Heart right ventricle (tissue), 16 donors: ENCODE measurements at regions of chr6 and their contacts with region 1.

Region 1: DNA sequence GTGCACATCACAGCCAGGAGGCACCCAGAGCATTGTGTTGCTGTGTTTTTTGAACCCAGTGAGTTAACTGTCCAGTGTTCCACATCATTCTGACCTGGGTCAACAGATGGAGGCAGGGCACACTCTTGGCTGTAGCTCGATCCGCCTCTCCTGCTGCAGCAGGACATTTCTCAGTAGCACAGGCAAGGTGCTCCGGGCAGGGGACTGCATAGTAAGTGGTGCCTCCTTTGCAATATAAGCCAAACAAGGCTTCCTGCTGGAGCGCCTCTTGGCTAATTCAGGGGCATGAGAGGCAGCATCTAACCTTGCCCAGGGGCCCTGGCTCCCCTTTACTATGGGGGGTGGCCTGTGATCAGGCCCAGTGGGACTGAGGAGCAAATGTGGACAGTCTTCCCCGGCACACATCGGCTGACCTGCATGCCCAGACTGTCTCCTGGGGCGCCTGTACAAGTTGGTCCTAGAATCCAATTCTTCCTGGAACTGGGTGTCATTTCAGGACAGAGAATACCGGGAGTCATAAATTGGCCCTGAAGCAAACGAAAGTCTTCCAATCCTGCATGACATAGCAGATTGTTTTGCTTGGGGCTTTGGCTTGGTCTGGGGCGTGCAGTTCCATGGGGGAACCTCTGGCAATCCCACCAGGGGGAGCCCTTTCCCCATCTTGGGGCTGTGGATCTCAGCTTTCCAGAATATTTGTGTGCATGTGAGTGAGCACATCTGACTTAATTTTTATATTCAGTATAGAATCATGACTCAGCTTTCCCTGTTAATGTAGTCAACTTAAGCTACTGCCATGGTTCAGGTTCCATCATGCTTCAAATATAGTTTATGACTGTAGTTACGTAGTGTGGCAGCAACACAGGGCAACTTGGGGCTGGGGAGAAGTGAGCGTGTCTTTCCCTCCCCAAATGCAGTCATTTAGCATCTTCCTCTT is 56.0 kb upstream of the DDR1 start:
- DNase-seq: peak; percentile 87 to 92
- ATAC-seq: peak; percentile 92 to 96 (median 94)
- H3K4me3 ChIP-seq: peak overlapping the region in 5 of 10 donors; percentile 17 to 41 (median 23)
- H3K27ac ChIP-seq: peak overlapping the region in 9 of 10 donors; percentile 33 to 91 (median 78)
- H3K4me1 ChIP-seq: peaks cover 3 to 49% (median 15%) of the 10 kb centered on the region in 9 donors
- H3K27me3 ChIP-seq: no peaks in the 10 kb centered on the region
- CTCF ChIP-seq: peak; percentile 89 to 97 (median 94)

Region 2: GRCh38 chr6:30742316-30743098 is 85.8 kb before region 1 on chr6 and contains the start of gene FLOT1:
- intact Hi-C with region 1: loop called in 9 of 10 experiments (anchors 5 to 10 kb)
- DNase-seq: peak; percentile 96 to 98
- ATAC-seq: peak; percentile 83 to 94 (median 90)
- H3K4me3 ChIP-seq: peak within 1 kb of the TSS; percentile 63 to 95 (median 82)
- H3K27ac ChIP-seq: peak within 1 kb of the TSS; percentile 91 to 100 (median 96)
- H3K4me1 ChIP-seq: peaks cover 11 to 63% (median 52%) of the 10 kb centered on the region in 9 donors
- H3K27me3 ChIP-seq: no peaks in the 10 kb centered on the region
- CTCF ChIP-seq: peak in 1 of 9 donors; percentile 18
- total RNA-seq, gene FLOT1: 158 to 280 (median 184) TPM

Region 3: GRCh38 chr6:30877419-30878371 is 49.4 kb after region 1 on chr6:
- intact Hi-C with region 1: loop called (anchors 1 to 5 kb)
- DNase-seq: peak; percentile 86 to 92
- ATAC-seq: peak; percentile 87 to 92 (median 89)
- H3K4me3 ChIP-seq: peak overlapping the region in 9 of 10 donors; percentile 14 to 49 (median 40)
- H3K27ac ChIP-seq: peak overlapping the region in 9 of 10 donors; percentile 3 to 86 (median 78)
- H3K4me1 ChIP-seq: peaks cover 9 to 33% (median 18%) of the 10 kb centered on the region in 9 donors
- H3K27me3 ChIP-seq: no peaks in the 10 kb centered on the region
- CTCF ChIP-seq: peak; percentile 71 to 95 (median 88)

Region 4: DNA sequence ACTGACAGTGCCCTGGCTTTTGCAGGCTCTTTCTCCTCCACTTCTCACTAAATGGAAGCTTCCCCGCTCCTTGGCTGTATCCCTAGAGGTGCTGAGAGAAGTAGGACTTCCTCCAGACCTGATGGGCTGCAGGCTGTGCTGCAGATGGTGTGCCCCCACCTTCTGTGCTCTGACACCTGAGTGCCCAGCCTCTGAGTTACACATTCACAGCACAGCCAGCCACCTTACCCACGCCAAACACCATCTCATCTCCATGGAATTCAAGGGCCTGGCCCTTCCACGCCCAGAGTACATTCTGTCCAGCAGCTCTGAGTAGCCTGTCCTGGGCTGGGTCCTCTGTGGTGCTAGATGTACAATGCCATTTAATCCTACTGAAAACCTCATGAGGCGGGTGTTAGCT is 98.3 kb after region 1 on chr6:
- intact Hi-C with region 1: no loop called
- DNase-seq: no peak
- ATAC-seq: peak in 7 of 8 donors; percentile 49 to 93 (median 65)
- H3K4me3 ChIP-seq: no peak overlapping the region
- H3K27ac ChIP-seq: no peak overlapping the region
- H3K4me1 ChIP-seq: peaks cover 0 to 16% (median 0%) of the 10 kb centered on the region in 9 donors
- H3K27me3 ChIP-seq: no peaks in the 10 kb centered on the region
- CTCF ChIP-seq: no peak

Region 5: DNA sequence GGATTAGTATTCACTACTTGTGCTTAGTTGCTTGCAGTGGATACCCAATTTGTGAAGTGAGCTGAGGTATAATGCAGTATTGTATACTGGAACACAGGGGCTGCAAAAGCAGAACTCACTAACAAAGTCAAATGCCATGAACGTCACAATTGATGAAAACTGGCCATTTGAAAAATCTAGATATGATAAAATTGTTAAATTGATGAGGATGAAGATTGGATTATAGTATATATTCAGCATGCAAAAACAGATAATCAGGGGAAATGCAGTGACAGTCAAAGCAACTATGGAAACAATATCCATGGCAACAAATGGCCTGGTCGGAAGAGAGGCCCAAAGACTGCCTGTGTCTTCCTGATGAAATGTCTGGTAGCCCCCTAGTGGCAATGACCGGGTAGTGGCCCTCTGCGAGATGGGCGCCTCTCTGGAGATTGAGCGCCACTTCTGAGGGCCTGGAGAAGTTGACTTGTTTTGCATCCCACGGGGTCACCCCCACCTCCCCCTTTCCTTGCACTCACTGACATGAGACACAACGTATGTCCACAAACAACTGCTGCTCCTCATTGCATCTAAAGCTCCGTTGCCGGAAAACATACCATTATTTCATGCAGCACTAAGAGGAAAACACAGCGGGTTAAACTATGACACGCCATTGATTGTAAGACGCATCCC is 240.5 kb after region 1 on chr6:
- intact Hi-C with region 1: loop called in 4 of 10 experiments (anchors 5 kb)
- DNase-seq: peak; percentile 74 to 81
- ATAC-seq: peak; percentile 77 to 93 (median 84)
- H3K4me3 ChIP-seq: no peak overlapping the region
- H3K27ac ChIP-seq: no peak overlapping the region
- H3K4me1 ChIP-seq: peaks cover 0 to 13% (median 0%) of the 10 kb centered on the region in 9 donors
- H3K27me3 ChIP-seq: no peaks in the 10 kb centered on the region
- CTCF ChIP-seq: peak; percentile 67 to 91 (median 86)

Region 6: DNA sequence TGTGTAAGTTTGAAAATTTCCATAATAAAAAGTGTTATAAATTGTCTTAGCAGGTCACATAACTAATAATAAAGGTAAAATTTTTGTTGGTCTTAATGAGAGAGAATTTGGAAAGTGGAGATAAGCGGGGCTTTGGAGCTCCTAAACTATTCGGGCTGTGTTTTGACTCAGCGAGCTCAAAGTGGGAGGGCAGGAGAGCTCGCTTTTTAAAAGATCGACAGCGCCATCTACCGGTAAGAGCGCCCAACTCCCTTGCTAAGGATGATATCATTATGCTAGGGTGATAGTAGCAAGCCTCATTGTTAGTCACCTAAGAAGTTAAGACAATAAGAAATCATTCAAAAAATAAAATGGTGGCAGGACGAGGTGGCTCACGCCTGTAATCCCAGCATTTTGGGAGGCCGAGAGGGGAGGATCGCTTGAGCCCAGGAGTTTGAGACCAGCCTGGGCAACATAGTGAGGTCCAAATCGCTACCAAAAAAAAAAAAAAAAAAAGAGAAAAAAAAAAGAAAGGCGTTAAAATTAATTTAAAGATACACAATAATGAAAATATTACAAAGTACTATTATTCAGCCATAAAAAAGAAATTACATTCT is 259.3 kb after region 1 on chr6:
- intact Hi-C with region 1: loop called in 8 of 10 experiments (anchors 2 to 5 kb)
- DNase-seq: peak; percentile 83 to 85
- ATAC-seq: peak; percentile 84 to 97 (median 94)
- H3K4me3 ChIP-seq: no peak overlapping the region
- H3K27ac ChIP-seq: peak overlapping the region in 1 of 10 donors; percentile 2
- H3K4me1 ChIP-seq: peaks cover 0 to 19% (median 8%) of the 10 kb centered on the region in 9 donors
- H3K27me3 ChIP-seq: no peaks in the 10 kb centered on the region
- CTCF ChIP-seq: peak; percentile 73 to 87 (median 81)